CD4-positive, alpha-beta T cell (primary cell): ENCODE measurements at regions of chr11 and their contacts with region 1.

Region 1: DNA sequence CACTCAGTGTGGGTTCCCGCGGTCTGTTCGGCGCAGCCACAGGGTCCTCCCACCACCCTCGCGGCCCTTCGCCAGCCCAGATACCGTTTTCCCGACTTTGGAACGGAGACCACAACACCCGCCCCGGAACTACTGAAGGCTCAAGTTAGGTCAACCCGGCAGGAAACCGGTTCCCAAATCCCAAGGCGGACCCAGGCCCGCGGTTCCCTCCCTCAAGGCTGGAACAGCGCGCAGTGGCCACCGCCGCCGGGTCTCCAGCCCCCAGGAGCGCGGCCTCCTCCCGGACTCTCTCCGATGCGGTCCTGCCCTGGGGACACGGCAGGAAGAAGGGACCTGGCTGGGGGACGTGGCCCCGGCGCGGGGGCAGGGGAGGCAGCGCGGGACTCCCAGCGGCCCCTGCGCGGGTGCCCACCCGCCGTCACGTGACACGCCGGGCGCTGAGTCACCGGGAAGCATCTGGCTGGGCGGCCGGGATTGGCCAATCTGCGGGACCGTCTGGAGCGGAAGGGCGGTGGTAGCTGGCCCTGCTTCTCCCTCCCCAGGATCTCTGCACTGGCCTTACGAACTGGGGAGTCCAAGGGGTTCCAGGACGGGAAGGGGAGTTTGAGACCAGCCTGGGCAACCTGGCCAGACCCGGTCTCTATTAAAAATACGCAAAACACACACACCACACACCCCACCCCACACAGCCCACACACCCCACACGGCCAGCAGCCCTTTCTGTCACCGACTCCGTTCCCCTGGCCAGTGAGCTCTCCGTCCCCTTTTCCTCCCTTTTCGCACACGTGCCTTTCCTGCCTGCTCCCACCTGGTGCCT is 21.5 kb upstream of the MALAT1 start:
- DNase-seq: peak; percentile 69 to 94 (median 88)
- ATAC-seq: peak; percentile 84
- H3K4me3 ChIP-seq: peak overlapping the region; percentile 80
- H3K4me3 Mint-ChIP-seq: peak overlapping the region; percentile 100
- H3K27ac ChIP-seq: peak overlapping the region; percentile 94 to 99
- H3K27ac Mint-ChIP-seq: peak overlapping the region; percentile 99
- H3K4me1 ChIP-seq: peaks cover 34% of the 10 kb centered on the region
- H3K4me1 Mint-ChIP-seq: peaks cover 15% of the 10 kb centered on the region
- H3K27me3 ChIP-seq: no peaks in the 10 kb centered on the region
- H3K27me3 Mint-ChIP-seq: no peaks in the 10 kb centered on the region
- CTCF ChIP-seq: no peak

Region 2: DNA sequence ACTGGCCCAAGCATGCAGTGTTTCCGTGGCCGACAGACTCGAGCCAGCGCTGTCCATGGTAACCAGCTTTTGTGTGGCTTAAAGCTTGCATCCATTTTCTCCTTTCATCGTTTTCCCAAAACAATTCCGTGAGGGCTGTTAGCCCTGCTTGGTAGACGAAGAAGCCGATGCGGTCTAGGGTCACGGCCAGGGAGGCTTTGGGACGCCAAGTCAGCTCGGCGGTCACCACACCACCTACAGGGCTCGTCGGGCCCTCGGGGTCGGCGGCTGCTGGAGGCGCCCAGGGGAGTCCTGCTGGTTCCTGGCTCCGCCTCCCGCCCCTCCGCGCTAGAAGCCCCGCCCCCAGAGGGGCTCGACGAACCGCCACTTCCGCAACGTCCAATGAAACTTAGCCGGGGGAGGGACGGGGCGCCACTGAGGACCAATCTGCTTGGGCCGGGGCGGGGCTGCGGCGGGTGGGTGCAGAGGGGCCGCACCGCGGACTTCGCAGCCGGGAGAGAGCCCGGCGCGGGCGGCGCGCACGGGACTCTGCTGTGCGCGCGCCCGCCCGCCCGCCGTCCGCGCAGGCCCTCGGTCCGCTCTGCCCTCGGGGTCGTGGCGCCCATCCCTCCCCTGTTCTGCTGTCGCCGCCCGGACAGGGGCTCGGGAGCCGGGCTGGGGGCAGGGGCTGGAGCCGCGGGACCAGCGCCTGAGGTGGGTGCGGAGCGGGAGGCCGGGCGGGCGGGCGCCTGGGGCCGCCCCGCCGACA is 122.9 kb before region 1 on chr11 and contains the start of gene TIGD3:
- CTCF ChIA-PET with region 1: no interaction called
- POLR2A ChIA-PET with region 1: no interaction called
- intact Hi-C with region 1: no loop called
- DNase-seq: peak; percentile 91 to 99 (median 96)
- ATAC-seq: peak; percentile 96
- H3K4me3 ChIP-seq: peak within 1 kb of the TSS; percentile 61
- H3K4me3 Mint-ChIP-seq: peak within 1 kb of the TSS; percentile 97
- H3K27ac ChIP-seq: peak within 1 kb of the TSS in 1 of 2 donors; percentile 26
- H3K27ac Mint-ChIP-seq: peak within 1 kb of the TSS; percentile 79
- H3K4me1 ChIP-seq: peaks cover 20% of the 10 kb centered on the region
- H3K4me1 Mint-ChIP-seq: peaks cover 18% of the 10 kb centered on the region
- H3K27me3 ChIP-seq: no peaks in the 10 kb centered on the region
- H3K27me3 Mint-ChIP-seq: no peaks in the 10 kb centered on the region
- CTCF ChIP-seq: no peak
- total RNA-seq, gene TIGD3: 0.73 to 0.85 TPM

Region 3: DNA sequence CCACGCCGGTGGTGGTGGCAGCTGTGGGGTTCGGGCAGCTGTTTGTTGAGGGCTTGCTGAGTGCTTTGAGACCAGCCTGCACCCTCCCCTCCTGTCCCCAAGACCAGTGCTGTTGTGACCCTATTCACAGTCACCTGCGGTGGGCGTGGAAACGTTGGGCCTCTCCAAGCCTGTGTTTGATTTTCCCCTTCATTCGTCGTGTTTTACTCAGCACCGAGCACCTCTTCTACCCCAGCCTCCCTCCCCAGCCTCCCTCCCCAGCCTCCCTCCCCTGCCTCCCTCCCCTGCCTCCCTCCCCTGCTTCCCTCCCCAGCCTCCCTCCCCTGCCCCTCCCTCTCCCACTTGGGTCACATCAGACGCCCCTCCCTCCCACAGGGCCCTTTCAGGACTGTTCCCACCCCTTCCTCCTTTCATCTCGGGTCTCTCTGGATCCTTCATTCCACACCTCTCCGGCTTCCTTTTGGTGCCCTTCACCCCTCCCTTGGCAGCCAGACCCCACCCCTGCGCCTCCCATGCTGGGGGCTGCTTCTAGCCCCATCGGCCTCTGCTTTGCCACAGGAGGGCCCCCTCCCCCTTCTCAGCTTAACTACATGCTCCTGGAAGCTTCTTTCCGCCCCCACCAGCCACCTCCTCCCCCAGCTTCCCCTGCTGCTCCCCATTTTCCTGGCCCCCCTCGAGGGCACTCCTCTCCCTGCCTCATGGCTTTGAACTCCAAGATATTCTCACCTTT is 76.1 kb before region 1 on chr11:
- CTCF ChIA-PET with region 1: no interaction called
- POLR2A ChIA-PET with region 1: no interaction called
- intact Hi-C with region 1: no loop called
- DNase-seq: no peak
- ATAC-seq: no peak
- H3K4me3 ChIP-seq: no peak overlapping the region
- H3K4me3 Mint-ChIP-seq: no peak overlapping the region
- H3K27ac ChIP-seq: no peak overlapping the region
- H3K27ac Mint-ChIP-seq: no peak overlapping the region
- H3K4me1 ChIP-seq: peaks cover 9% of the 10 kb centered on the region
- H3K4me1 Mint-ChIP-seq: peaks cover 5% of the 10 kb centered on the region
- H3K27me3 ChIP-seq: no peaks in the 10 kb centered on the region
- H3K27me3 Mint-ChIP-seq: no peaks in the 10 kb centered on the region
- CTCF ChIP-seq: no peak

Region 4: DNA sequence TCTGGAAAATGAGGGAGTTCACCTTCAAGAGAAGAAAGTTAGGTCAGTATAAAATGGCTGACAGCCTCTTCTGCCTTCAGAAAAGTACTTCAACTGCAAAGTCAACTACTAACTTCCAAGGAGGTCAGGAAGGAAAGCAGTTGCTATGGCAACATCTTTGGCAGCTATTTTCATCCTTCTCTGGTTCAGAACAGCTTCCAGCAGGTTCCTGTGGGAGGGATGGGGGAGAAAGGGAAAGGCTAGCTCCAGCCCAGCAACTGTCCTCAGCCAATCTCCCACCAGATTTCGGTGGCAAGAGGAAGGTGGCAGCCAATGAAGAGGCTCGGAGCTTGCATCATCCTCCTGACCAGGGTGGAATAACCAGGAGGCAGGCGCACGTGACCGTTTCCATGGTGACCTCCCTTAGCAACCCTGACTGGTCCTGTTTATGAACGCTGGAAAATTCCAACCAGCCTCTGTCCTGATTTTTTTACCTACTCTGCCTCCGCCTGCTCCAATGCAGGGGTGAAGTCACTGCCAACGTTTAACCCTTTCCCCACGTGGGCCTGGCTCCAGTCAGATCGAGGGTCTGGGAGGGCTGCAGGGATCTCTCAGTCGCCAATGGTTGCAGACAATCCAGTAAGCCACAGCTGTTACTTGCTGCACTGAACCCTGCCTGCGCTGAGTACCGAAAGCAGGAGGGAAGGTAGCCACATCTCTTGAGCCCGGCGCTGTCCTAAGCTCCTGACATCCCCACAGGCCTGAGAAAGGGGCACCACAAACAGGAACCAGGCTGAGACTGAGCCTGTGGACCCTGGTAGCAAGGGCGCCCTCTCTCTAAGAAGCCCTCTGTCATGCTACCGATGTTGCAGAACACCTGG is 10.3 kb after region 1 on chr11:
- CTCF ChIA-PET with region 1: interaction called, 4 read pairs
- POLR2A ChIA-PET with region 1: interaction called, 11 read pairs
- intact Hi-C with region 1: no loop called
- DNase-seq: peak in 4 of 14 experiments; percentile 34 to 80 (median 60)
- ATAC-seq: peak; percentile 59
- H3K4me3 ChIP-seq: no peak overlapping the region
- H3K4me3 Mint-ChIP-seq: peak overlapping the region; percentile 34
- H3K27ac ChIP-seq: no peak overlapping the region
- H3K27ac Mint-ChIP-seq: peak overlapping the region; percentile 58
- H3K4me1 ChIP-seq: peaks cover 28% of the 10 kb centered on the region
- H3K4me1 Mint-ChIP-seq: peaks cover 24% of the 10 kb centered on the region
- H3K27me3 ChIP-seq: no peaks in the 10 kb centered on the region
- H3K27me3 Mint-ChIP-seq: no peaks in the 10 kb centered on the region
- CTCF ChIP-seq: no peak